Activated CD8-positive, alpha-beta T cell treated with anti-CD3 and anti-CD28 coated beads for 36 hours (primary cell): ENCODE measurements at regions of chr17 and their contacts with region 1.

Region 1: DNA sequence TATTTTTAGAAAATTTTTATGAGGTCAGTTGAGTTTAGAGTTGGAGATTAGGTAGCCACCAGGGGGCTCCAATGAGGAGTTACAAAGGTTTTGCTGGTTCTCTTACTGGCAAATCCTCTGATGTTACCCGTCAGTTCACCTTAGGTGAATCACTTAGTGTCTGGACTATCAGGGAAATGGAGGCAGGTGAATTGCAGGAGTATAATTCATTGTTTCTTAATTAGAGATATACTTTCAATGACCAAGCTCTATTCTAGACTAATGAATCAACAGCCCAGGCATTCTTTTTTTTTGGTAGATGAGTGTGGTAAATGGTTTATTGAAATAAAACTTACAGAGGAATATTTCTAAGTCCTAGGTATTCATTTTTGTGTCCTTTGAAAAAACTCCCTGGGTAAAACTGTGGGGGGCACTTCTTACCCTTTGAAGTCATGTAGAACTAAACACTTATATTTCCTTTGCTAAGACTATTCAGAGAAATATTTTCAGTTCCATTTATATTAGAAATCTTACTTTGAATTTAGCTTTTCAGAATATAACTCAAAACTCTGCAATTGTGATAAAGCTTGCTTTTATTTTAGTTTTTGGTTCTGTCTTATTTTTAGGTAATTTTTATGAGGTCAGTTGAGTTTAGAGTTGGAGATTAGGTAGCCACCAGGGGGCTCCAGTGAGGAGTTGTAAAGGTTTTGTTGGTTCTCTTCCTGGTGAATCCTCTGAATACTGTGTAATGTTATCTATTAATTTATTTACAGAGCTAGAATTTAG is 17.7 kb downstream of the PSMD11 start:
- DNase-seq: peak; percentile 85
- ATAC-seq: peak; percentile 69
- H3K4me3 Mint-ChIP-seq: no peak overlapping the region
- H3K27ac Mint-ChIP-seq: peak overlapping the region; percentile 50
- H3K4me1 Mint-ChIP-seq: peaks cover 35% of the 10 kb centered on the region
- H3K27me3 Mint-ChIP-seq: no peaks in the 10 kb centered on the region
- CTCF ChIP-seq: peak; percentile 62

Region 2: GRCh38 chr17:32444308-32445073 is 17.5 kb before region 1 on chr17 and contains the start of gene PSMD11:
- CTCF ChIA-PET with region 1: interaction called, 164 read pairs
- POLR2A ChIA-PET with region 1: interaction called, 4 read pairs
- intact Hi-C with region 1: no loop called
- DNase-seq: peak; percentile 99
- ATAC-seq: peak; percentile 97
- H3K4me3 Mint-ChIP-seq: peak within 1 kb of the TSS; percentile 80
- H3K27ac Mint-ChIP-seq: peak within 1 kb of the TSS; percentile 76
- H3K4me1 Mint-ChIP-seq: peaks cover 37% of the 10 kb centered on the region
- H3K27me3 Mint-ChIP-seq: peaks cover 6% of the 10 kb centered on the region
- CTCF ChIP-seq: no peak
- total RNA-seq, gene PSMD11: 119 to 130 TPM

Region 3: DNA sequence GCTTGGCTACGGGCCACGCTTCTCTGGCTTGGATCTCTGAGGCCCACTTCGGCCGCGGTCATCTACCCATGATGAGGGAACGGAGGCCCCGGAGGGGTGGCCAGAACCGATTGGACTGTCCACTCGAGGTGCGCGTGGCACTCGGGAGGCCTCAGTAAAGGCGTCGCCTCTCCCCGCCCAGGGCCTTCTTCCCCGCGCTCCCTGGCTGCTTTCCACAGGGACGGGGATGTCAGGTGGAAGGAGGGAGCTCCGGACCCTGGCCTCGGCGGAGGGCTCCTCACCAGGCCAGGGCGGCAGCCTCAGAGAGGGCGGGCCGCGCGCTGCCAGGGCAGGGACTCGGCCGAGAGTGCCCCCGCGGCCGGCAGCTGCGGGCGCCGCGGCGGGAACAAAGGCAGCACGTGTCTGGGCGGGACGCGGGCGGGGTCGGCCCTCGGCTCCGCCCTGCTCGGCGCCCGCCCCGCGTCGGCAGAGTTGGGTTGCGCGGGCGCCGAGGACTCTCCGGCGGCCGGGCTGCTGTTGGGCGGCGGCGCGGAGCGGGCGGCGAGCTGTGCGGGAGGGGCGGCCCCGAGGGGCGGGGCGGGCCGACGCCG is 24.2 kb after region 1 on chr17:
- CTCF ChIA-PET with region 1: interaction called, 70 read pairs
- POLR2A ChIA-PET with region 1: interaction called, 8 read pairs
- intact Hi-C with region 1: no loop called
- DNase-seq: peak; percentile 61
- ATAC-seq: peak; percentile 74
- H3K4me3 Mint-ChIP-seq: peak overlapping the region; percentile 61
- H3K27ac Mint-ChIP-seq: peak overlapping the region; percentile 16
- H3K4me1 Mint-ChIP-seq: peaks cover 50% of the 10 kb centered on the region
- H3K27me3 Mint-ChIP-seq: no peaks in the 10 kb centered on the region
- CTCF ChIP-seq: no peak

Region 4: GRCh38 chr17:32502710-32503109 is 40.7 kb after region 1 on chr17:
- CTCF ChIA-PET with region 1: no interaction called
- POLR2A ChIA-PET with region 1: no interaction called
- intact Hi-C with region 1: no loop called
- DNase-seq: no peak
- ATAC-seq: no peak
- H3K4me3 Mint-ChIP-seq: no peak overlapping the region
- H3K27ac Mint-ChIP-seq: peak overlapping the region; percentile 91
- H3K4me1 Mint-ChIP-seq: peaks cover 60% of the 10 kb centered on the region
- H3K27me3 Mint-ChIP-seq: no peaks in the 10 kb centered on the region
- CTCF ChIP-seq: no peak

Region 5: DNA sequence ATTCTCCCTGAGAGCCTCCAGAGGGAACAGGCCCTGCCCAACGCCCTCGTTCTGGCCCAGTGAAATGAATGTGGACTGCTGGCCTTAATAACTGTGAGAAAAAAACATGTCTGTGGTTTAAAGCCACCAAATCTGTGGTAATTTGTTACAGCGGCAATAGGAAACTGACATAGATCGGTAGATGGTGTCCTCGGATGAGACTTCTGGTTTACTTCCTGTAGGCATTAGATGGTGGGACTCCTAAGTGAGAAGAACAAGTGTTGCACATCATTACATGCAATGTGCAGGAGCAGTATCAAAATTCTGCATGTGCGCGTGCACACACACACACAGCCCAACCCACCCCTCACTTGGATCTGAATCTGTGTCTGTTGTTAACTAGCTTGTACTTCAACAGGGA is 66.8 kb after region 1 on chr17:
- CTCF ChIA-PET with region 1: interaction called, 21 read pairs
- POLR2A ChIA-PET with region 1: no interaction called
- intact Hi-C with region 1: no loop called
- DNase-seq: no peak
- ATAC-seq: peak; percentile 15
- H3K4me3 Mint-ChIP-seq: no peak overlapping the region
- H3K27ac Mint-ChIP-seq: peak overlapping the region; percentile 3
- H3K4me1 Mint-ChIP-seq: peaks cover 35% of the 10 kb centered on the region
- H3K27me3 Mint-ChIP-seq: peaks cover 6% of the 10 kb centered on the region
- CTCF ChIP-seq: no peak

Region 6: DNA sequence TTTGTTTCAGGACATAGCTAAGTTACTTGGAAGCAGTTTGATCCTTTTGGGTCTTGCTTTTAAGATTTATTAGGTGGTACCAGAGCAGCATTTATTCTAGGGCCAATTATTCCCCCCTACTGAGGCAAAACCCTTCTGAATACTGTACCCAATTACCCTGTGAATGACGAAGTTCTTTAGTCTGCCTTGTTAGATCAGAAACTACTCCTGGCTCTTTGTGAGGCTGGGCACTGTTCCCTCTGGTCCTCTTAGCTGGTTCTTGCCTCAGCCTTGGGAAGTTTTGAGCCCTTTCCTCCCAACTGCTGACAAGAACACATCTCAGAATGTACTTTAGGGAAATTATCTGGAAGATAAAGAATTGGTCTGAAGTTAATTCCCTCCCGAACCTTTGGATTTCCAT is 140.4 kb after region 1 on chr17:
- CTCF ChIA-PET with region 1: interaction called, 40 read pairs
- POLR2A ChIA-PET with region 1: no interaction called
- intact Hi-C with region 1: no loop called
- DNase-seq: no peak
- ATAC-seq: no peak
- H3K4me3 Mint-ChIP-seq: no peak overlapping the region
- H3K27ac Mint-ChIP-seq: no peak overlapping the region
- H3K4me1 Mint-ChIP-seq: no peaks in the 10 kb centered on the region
- H3K27me3 Mint-ChIP-seq: no peaks in the 10 kb centered on the region
- CTCF ChIP-seq: no peak

Region 7: GRCh38 chr17:32659419-32659842 is 197.4 kb after region 1 on chr17:
- CTCF ChIA-PET with region 1: interaction called, 17 read pairs
- POLR2A ChIA-PET with region 1: no interaction called
- intact Hi-C with region 1: no loop called
- DNase-seq: peak; percentile 83
- ATAC-seq: peak; percentile 78
- H3K4me3 Mint-ChIP-seq: no peak overlapping the region
- H3K27ac Mint-ChIP-seq: no peak overlapping the region
- H3K4me1 Mint-ChIP-seq: no peaks in the 10 kb centered on the region
- H3K27me3 Mint-ChIP-seq: no peaks in the 10 kb centered on the region
- CTCF ChIP-seq: peak; percentile 95